Right ventricle myocardium superior (tissue), 1 donor: ENCODE measurements at regions of chr4 and their contacts with region 1.

Region 1: DNA sequence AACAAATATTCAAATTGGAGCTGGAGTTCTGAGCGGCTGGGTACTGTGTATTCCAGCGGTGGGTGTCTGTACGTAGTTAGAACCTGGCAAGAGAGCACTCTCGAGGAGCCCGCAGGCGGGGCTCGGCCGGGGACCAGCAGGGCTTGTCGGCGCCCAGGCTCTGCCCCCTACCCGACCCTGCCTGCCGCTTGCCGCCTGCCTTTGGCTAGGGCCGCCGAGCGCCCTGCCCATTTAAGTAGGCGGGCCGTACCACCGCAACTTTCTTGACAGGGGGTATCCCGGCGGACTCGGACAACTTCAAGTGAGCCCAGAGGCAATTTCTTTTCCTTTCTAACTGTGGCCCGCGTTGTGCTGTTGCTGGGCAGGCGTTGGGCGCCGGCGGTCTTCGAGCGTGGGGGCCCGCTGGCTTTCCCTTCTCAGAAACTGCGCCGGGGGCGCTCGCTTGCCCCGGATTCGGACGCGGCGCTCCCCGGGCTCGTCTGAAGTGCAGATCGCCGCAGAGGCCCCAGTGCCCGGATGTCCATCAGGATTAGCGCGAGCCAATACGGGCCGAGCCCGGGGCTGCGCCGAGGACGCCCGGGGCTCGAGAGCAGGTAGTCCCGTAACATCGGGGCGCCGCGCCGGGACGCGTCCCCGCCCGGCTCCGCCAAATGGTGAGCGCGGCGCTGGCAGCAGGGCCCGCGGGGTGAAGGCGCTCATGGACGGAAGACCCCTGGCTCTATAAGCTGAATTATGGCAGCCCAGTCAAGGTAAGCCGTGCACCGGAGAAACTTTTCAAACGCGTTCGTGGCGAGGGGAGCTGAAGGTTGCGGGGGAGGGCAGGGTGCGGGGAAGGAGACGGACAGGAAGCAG is 72.1 kb downstream of the AFF1 start:
- DNase-seq: peak; percentile 96
- ATAC-seq: peak; percentile 95

Region 2: GRCh38 chr4:86934771-86935565 is 71.9 kb before region 1 on chr4 and contains the start of gene AFF1:
- intact Hi-C with region 1: loop called (anchors 5 kb)
- DNase-seq: peak; percentile 95
- ATAC-seq: peak; percentile 95
- total RNA-seq, gene AFF1: 60.5 TPM

Region 3: GRCh38 chr4:87093443-87094123 is 86.7 kb after region 1 on chr4:
- intact Hi-C with region 1: loop called (anchors 5 kb)
- DNase-seq: no peak
- ATAC-seq: peak; percentile 82

Region 4: GRCh38 chr4:87150498-87151261 is 143.8 kb after region 1 on chr4:
- intact Hi-C with region 1: no loop called
- DNase-seq: no peak
- ATAC-seq: peak; percentile 79